CD4-positive, alpha-beta T cell (primary cell): ENCODE measurements at regions of chr2 and their contacts with region 1.

Region 1: DNA sequence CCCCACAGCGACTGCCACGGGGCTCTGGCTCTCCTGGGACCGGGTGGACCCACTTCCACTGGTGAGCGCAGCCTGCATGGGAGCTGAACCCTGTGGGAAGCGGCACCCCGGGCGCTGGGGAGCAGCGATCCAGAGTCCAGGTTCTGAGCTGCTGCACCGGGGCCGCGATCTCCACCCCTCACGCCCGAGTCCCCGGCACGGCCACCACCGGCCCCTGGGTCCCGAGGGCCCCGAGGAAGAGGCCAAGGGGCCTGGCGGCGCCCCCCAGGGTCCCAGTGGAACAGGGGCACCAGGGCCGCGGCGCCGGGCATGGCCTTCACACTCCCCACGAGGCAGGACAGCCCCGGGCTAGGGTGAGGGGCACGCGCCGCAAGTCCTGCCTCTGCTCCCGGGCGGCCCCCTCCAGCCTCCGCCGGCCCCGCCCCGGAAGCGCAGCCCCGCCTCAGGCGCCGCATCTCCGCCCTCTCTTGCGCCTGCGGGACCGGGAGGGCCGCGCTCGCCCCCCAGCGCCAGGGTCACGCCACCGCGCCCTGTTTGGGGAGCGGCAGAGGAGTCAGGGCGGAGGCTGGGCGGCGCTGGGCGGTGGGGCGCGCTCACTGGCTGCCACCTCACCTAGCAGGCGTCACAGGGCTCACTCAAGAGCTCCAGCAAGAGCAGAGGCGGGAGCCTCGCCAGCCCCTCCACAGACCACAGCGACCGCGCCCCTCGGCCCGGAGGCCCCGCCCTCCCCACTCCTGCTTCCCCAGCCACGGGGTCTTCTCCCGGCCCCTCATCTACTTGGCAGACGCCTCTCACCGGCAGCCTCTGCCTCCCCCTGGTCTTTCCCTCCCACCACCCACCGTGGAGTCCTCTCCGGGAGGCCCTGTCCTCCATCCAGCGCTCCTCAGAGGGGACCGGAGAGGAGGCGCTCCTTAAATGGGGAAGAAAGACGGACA is 26.8 kb downstream of the THAP4 start:
- DNase-seq: peak; percentile 82 to 96 (median 89)
- ATAC-seq: peak; percentile 99
- H3K4me3 ChIP-seq: peak overlapping the region; percentile 49
- H3K4me3 Mint-ChIP-seq: peak overlapping the region; percentile 45
- H3K27ac ChIP-seq: no peak overlapping the region
- H3K27ac Mint-ChIP-seq: peak overlapping the region; percentile 77
- H3K4me1 ChIP-seq: peaks cover 24% of the 10 kb centered on the region
- H3K4me1 Mint-ChIP-seq: peaks cover 25% of the 10 kb centered on the region
- H3K27me3 ChIP-seq: no peaks in the 10 kb centered on the region
- H3K27me3 Mint-ChIP-seq: no peaks in the 10 kb centered on the region
- CTCF ChIP-seq: peak; percentile 65

Region 2: GRCh38 chr2:240832205-240832727 is 777.9 kb before region 1 on chr2:
- CTCF ChIA-PET with region 1: no interaction called
- POLR2A ChIA-PET with region 1: no interaction called
- intact Hi-C with region 1: loop called in 1 of 2 experiments (anchors 10 kb)
- DNase-seq: peak; percentile 98 to 100 (median 99)
- ATAC-seq: peak; percentile 91
- H3K4me3 ChIP-seq: peak overlapping the region; percentile 43
- H3K4me3 Mint-ChIP-seq: peak overlapping the region; percentile 38
- H3K27ac ChIP-seq: no peak overlapping the region
- H3K27ac Mint-ChIP-seq: no peak overlapping the region
- H3K4me1 ChIP-seq: peaks cover 14% of the 10 kb centered on the region
- H3K4me1 Mint-ChIP-seq: no peaks in the 10 kb centered on the region
- H3K27me3 ChIP-seq: peaks cover 17 to 26% of the 10 kb centered on the region in 2 experiments
- H3K27me3 Mint-ChIP-seq: peaks cover 36% of the 10 kb centered on the region
- CTCF ChIP-seq: no peak

Region 3: GRCh38 chr2:241257417-241258032 is 352.6 kb before region 1 on chr2:
- CTCF ChIA-PET with region 1: no interaction called
- POLR2A ChIA-PET with region 1: no interaction called
- intact Hi-C with region 1: loop called in 1 of 2 experiments (anchors 10 kb)
- DNase-seq: peak in 1 of 14 experiments; percentile 12
- ATAC-seq: no peak
- H3K4me3 ChIP-seq: no peak overlapping the region
- H3K4me3 Mint-ChIP-seq: no peak overlapping the region
- H3K27ac ChIP-seq: no peak overlapping the region
- H3K27ac Mint-ChIP-seq: no peak overlapping the region
- H3K4me1 ChIP-seq: no peaks in the 10 kb centered on the region
- H3K4me1 Mint-ChIP-seq: peaks cover 9% of the 10 kb centered on the region
- H3K27me3 ChIP-seq: no peaks in the 10 kb centered on the region
- H3K27me3 Mint-ChIP-seq: no peaks in the 10 kb centered on the region
- CTCF ChIP-seq: peak; percentile 25

Region 4: GRCh38 chr2:241443486-241444223 is 166.5 kb before region 1 on chr2:
- CTCF ChIA-PET with region 1: no interaction called
- POLR2A ChIA-PET with region 1: no interaction called
- intact Hi-C with region 1: loop called in 1 of 2 experiments (anchors 5 kb)
- DNase-seq: peak; percentile 86 to 94 (median 92)
- ATAC-seq: peak; percentile 81
- H3K4me3 ChIP-seq: no peak overlapping the region
- H3K4me3 Mint-ChIP-seq: peak overlapping the region; percentile 59
- H3K27ac ChIP-seq: no peak overlapping the region
- H3K27ac Mint-ChIP-seq: peak overlapping the region; percentile 74
- H3K4me1 ChIP-seq: peaks cover 27% of the 10 kb centered on the region
- H3K4me1 Mint-ChIP-seq: peaks cover 18% of the 10 kb centered on the region
- H3K27me3 ChIP-seq: peaks cover 46 to 63% of the 10 kb centered on the region in 2 experiments
- H3K27me3 Mint-ChIP-seq: peaks cover 79% of the 10 kb centered on the region
- CTCF ChIP-seq: no peak

Region 5: GRCh38 chr2:241584423-241584822 is 25.7 kb before region 1 on chr2:
- CTCF ChIA-PET with region 1: no interaction called
- POLR2A ChIA-PET with region 1: no interaction called
- intact Hi-C with region 1: no loop called
- DNase-seq: no peak
- ATAC-seq: no peak
- H3K4me3 ChIP-seq: no peak overlapping the region
- H3K4me3 Mint-ChIP-seq: no peak overlapping the region
- H3K27ac ChIP-seq: no peak overlapping the region
- H3K27ac Mint-ChIP-seq: no peak overlapping the region
- H3K4me1 ChIP-seq: no peaks in the 10 kb centered on the region
- H3K4me1 Mint-ChIP-seq: no peaks in the 10 kb centered on the region
- H3K27me3 ChIP-seq: no peaks in the 10 kb centered on the region
- H3K27me3 Mint-ChIP-seq: no peaks in the 10 kb centered on the region
- CTCF ChIP-seq: no peak